ENCODE measurements at regions of chr12 and their contacts with region 1.

Region 1: DNA sequence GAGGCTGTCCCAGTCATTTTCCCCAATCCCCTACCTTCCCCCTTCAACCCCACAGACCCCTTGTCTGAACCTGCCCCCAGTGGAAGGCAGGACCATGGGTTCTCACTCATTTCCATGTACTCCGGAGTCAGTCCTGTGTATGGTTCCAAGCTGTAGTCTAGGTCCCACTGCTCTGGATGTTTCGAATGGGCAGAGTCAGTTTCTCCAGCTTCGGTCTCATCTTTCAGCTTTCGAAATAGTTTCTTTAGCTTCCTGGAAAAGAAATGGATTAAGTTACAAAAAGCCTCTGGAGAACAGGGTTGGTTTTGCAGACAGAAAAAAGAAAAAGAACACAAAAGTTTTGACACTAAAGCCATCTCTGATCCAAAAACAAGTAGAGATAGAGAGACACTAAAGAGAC is 167.5 kb downstream of the NTF3 start:
- DNase-seq: no peak
- ATAC-seq: no peak
- H3K4me3 ChIP-seq: no peak overlapping the region
- H3K27ac ChIP-seq: no peak overlapping the region
- H3K4me1 ChIP-seq: no peaks in the 10 kb centered on the region
- H3K27me3 ChIP-seq: peaks cover 27% of the 10 kb centered on the region
- CTCF ChIP-seq: no peak
- POLR2A ChIP-seq: no peak
- RAD21 ChIP-seq: no peak

Region 2: DNA sequence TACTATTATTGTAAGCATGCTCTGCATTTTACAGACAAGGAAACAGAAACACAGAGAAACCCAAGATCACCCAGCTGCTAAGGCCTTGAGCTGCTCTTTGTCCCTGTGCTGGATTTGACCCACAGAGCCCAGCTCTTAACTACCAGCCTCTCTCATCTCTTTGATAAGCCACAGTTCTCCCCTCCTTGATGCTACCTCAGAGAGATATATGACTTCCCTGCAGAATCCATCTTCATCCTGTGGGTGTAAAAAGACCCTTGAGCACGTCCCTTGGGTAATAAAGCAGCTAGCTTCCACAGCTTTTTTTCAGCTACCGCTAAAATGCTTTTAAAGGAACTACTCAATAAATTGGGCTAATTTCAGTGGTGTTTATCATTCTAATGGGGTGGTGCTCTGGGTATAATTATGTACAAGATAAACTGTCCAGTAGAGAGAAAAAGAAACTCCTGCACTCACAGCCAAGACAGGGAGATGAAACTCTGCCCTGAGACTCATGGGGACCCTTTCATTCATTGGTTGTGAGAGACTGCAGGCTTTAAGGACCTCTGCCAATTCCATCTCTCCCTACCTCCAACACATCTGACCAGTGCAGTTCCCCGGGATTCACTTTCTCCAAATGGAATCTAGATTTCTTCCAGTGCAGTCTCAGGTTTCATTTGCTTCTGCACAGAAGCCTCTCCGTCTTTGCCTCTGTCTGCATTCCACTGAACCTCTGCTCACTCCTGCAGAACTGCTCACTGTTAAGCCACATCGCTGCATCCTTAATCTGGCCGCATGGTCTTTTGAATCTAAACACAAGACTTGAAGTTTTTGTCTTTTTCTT is 192.1 kb before region 1 on chr12:
- CTCF ChIA-PET with region 1: no interaction called
- POLR2A ChIA-PET with region 1: no interaction called
- dilution Hi-C with region 1: no loop called
- in situ Hi-C with region 1: no loop called
- intact Hi-C with region 1: no loop called
- DNase-seq: peak; percentile 65
- ATAC-seq: peak; percentile 68
- H3K4me3 ChIP-seq: no peak overlapping the region
- H3K27ac ChIP-seq: no peak overlapping the region
- H3K4me1 ChIP-seq: no peaks in the 10 kb centered on the region
- H3K27me3 ChIP-seq: peaks cover 24% of the 10 kb centered on the region
- CTCF ChIP-seq: no peak
- POLR2A ChIP-seq: no peak
- RAD21 ChIP-seq: no peak

Region 3: DNA sequence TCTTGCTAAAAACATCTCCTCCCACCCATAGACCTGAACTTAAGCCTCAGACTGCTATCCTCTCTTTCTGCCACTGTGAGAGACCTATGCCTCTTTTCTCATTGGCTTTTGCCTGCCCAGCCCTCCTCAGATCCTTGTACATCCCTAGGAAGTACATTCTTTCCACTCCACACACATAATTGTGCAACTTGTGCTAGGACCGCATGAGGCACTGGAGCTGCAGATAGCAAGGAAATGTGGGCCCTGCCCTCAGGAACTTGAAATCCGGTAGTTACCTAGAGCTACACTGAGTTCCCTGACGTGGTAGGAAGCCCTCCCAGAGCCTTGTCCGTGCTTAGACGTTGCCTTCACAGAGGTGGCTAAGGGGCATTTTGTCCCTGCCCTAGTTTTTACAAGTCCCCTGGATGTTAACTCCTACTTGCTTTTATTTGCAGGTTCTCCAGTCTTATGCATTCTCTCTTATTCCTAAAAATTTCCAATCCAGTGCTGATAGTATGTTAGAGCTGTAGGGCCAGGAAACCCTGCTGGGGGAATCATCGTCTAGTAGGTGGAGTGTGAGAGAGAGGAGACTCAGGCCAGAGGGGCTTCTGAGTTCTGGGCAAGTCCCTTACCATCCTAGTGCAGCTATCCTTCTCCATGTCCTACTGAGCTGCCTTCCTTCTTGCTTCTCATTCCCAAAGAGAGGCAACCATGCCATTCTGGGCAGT is 126.1 kb before region 1 on chr12:
- CTCF ChIA-PET with region 1: no interaction called
- POLR2A ChIA-PET with region 1: interaction called, 10 read pairs
- dilution Hi-C with region 1: no loop called
- in situ Hi-C with region 1: no loop called
- intact Hi-C with region 1: no loop called
- DNase-seq: peak; percentile 61
- ATAC-seq: peak; percentile 74
- H3K4me3 ChIP-seq: no peak overlapping the region
- H3K27ac ChIP-seq: no peak overlapping the region
- H3K4me1 ChIP-seq: peaks cover 32% of the 10 kb centered on the region
- H3K27me3 ChIP-seq: no peaks in the 10 kb centered on the region
- CTCF ChIP-seq: no peak
- POLR2A ChIP-seq: no peak
- RAD21 ChIP-seq: no peak

Region 4: DNA sequence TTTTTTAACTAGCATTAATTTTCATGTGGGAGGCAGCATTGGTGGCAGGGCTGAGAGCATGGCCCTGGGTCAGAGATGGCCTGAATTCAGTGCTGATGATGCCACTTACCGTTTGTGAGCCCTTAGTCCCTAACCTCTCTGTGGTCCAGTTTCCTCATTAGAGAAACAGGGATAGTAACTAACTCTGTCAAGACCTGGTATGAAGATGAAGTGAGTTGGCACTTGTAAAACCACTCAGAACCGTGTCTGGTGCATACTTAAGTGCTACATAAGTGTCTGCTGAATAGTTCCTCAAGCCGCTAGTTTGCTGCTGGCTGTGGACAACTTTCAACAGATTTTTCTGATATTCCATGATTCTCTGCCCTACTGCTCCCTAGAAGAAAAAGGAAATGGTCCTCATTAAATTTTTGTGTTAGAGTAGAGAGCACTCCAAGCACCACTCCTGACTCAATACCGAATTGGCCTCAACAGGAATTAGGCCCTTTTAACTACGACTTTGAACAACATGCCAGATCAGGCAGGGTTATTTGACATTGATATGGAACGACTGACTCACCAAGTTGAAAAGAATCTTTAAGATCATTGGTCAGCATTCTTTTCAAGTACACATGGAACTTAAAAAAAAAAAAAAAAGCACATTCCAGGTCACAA is 95.5 kb after region 1 on chr12:
- CTCF ChIA-PET with region 1: no interaction called
- POLR2A ChIA-PET with region 1: no interaction called
- dilution Hi-C with region 1: no loop called
- in situ Hi-C with region 1: no loop called
- intact Hi-C with region 1: no loop called
- DNase-seq: peak; percentile 29
- ATAC-seq: no peak
- H3K4me3 ChIP-seq: no peak overlapping the region
- H3K27ac ChIP-seq: no peak overlapping the region
- H3K4me1 ChIP-seq: no peaks in the 10 kb centered on the region
- H3K27me3 ChIP-seq: peaks cover 11% of the 10 kb centered on the region
- CTCF ChIP-seq: no peak
- POLR2A ChIP-seq: no peak
- RAD21 ChIP-seq: no peak

Region 5: GRCh38 chr12:5808981-5809380 is 209.6 kb after region 1 on chr12:
- CTCF ChIA-PET with region 1: no interaction called
- POLR2A ChIA-PET with region 1: no interaction called
- dilution Hi-C with region 1: no loop called
- in situ Hi-C with region 1: no loop called
- intact Hi-C with region 1: no loop called
- DNase-seq: peak; percentile 85
- ATAC-seq: peak; percentile 72
- H3K4me3 ChIP-seq: no peak overlapping the region
- H3K27ac ChIP-seq: no peak overlapping the region
- H3K4me1 ChIP-seq: peaks cover 5% of the 10 kb centered on the region
- H3K27me3 ChIP-seq: peaks cover 3% of the 10 kb centered on the region
- CTCF ChIP-seq: no peak
- POLR2A ChIP-seq: no peak
- RAD21 ChIP-seq: no peak

Measured in IMR-90 (cell line).